ENCODE measurements at regions of chr17 and their contacts with region 1.

Region 1: DNA sequence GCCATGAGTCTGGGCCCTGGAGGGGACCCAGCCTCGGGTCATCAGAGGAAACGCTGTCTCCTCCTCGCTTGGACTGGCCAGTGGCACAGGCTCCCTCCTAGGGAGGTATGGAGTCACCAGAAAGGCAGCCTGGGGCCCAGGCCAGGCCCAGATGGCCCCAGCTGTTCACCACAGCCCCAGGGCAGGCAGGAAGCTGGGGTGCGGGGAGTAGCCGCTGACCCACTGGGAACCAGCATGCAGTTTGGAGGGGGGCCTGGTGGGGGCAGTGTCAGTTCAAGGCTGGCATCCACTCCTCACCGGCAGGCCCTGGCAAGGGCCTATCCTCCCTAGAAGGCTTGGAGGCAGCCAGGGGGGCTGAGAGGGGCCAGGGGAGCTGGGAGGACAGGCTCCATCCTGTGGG is 48.8 kb downstream of the SDK2 start:
- DNase-seq: peak in 5 of 9 donors; percentile 17 to 34 (median 28)
- ATAC-seq: no peak
- H3K4me3 ChIP-seq: no peak overlapping the region
- H3K4me3 Mint-ChIP-seq: peak overlapping the region in 1 of 10 donors; percentile 85
- H3K27ac ChIP-seq: peak overlapping the region; percentile 20
- H3K27ac Mint-ChIP-seq: peak overlapping the region in 7 of 9 donors; percentile 45 to 97 (median 93)
- H3K4me1 ChIP-seq: peaks cover 37 to 59% of the 10 kb centered on the region in 2 donors
- H3K4me1 Mint-ChIP-seq: peaks cover 33 to 74% (median 65%) of the 10 kb centered on the region in 7 donors
- H3K27me3 ChIP-seq: no peaks in the 10 kb centered on the region
- H3K27me3 Mint-ChIP-seq: no peaks in the 10 kb centered on the region

Region 2: GRCh38 chr17:73551759-73552158 is 43.7 kb before region 1 on chr17:
- CTCF ChIA-PET with region 1: no interaction called
- POLR2A ChIA-PET with region 1: interaction called, 3 read pairs
- intact Hi-C with region 1: loop called in 1 of 2 experiments (anchors 5 kb)
- DNase-seq: peak in 6 of 9 donors; percentile 6 to 37 (median 24)
- ATAC-seq: no peak
- H3K4me3 ChIP-seq: no peak overlapping the region
- H3K4me3 Mint-ChIP-seq: peak overlapping the region; percentile 75 to 91 (median 84)
- H3K27ac ChIP-seq: no peak overlapping the region
- H3K27ac Mint-ChIP-seq: peak overlapping the region in 8 of 9 donors; percentile 49 to 88 (median 74)
- H3K4me1 ChIP-seq: peaks cover 0 to 4% of the 10 kb centered on the region in 2 donors
- H3K4me1 Mint-ChIP-seq: peaks cover 8 to 55% (median 40%) of the 10 kb centered on the region in 7 donors
- H3K27me3 ChIP-seq: no peaks in the 10 kb centered on the region
- H3K27me3 Mint-ChIP-seq: peaks cover 0 to 3% (median 0%) of the 10 kb centered on the region in 5 donors

Region 3: DNA sequence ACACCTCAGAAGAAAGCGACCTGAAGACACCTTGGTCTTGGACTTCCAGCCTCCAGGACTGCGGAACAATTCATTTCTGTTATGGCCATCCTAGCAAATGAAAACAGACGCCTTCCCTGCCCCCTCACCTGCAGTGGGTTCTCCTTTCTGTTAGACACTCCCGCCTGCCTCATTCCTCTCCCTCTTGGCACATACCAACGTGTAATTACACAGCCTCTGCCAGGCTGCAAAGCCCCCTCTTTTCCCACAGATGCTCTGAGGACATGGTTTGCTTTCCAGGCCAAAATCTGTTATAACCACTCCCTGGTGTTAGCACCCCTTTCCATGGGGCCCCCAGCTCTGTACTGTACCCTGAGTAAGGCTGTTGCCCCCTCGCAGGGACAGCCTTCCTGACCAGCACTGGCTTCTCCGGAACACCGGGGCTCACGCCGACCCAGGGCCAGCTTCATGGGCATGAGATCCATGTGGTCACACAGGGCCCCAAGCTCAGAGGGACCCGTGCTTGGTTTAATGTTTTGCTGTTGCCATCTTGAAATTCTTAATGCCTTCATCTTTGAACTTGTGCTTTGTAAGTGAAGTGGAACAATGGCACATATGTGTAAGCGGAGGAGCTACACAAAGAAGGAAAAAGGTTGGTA is 15.3 kb before region 1 on chr17:
- CTCF ChIA-PET with region 1: no interaction called
- POLR2A ChIA-PET with region 1: interaction called, 12 read pairs
- intact Hi-C with region 1: no loop called
- DNase-seq: no peak
- ATAC-seq: no peak
- H3K4me3 ChIP-seq: no peak overlapping the region
- H3K4me3 Mint-ChIP-seq: no peak overlapping the region
- H3K27ac ChIP-seq: no peak overlapping the region
- H3K27ac Mint-ChIP-seq: peak overlapping the region in 1 of 9 donors; percentile 76
- H3K4me1 ChIP-seq: no peaks in the 10 kb centered on the region
- H3K4me1 Mint-ChIP-seq: peaks cover 0 to 27% (median 8%) of the 10 kb centered on the region in 7 donors
- H3K27me3 ChIP-seq: no peaks in the 10 kb centered on the region
- H3K27me3 Mint-ChIP-seq: peaks cover 0 to 2% (median 0%) of the 10 kb centered on the region in 5 donors

Region 4: GRCh38 chr17:73827627-73828291 is 232.3 kb after region 1 on chr17:
- CTCF ChIA-PET with region 1: no interaction called
- POLR2A ChIA-PET with region 1: no interaction called
- intact Hi-C with region 1: loop called in 1 of 2 experiments (anchors 5 kb)
- DNase-seq: peak in 6 of 9 donors; percentile 41 to 66 (median 54)
- ATAC-seq: peak; percentile 67
- H3K4me3 ChIP-seq: no peak overlapping the region
- H3K4me3 Mint-ChIP-seq: peak overlapping the region; percentile 2 to 89 (median 74)
- H3K27ac ChIP-seq: peak overlapping the region; percentile 73
- H3K27ac Mint-ChIP-seq: peak overlapping the region; percentile 72 to 100 (median 91)
- H3K4me1 ChIP-seq: peaks cover 19 to 73% of the 10 kb centered on the region in 2 donors
- H3K4me1 Mint-ChIP-seq: peaks cover 6 to 98% (median 83%) of the 10 kb centered on the region in 7 donors
- H3K27me3 ChIP-seq: no peaks in the 10 kb centered on the region
- H3K27me3 Mint-ChIP-seq: peaks cover 0 to 9% (median 0%) of the 10 kb centered on the region in 5 donors

Measured in naive thymus-derived CD4-positive, alpha-beta T cell (primary cell).